OCI-LY7 (cell line): ENCODE measurements at regions of chr9 and their contacts with region 1.

Region 1: GRCh38 chr9:71897577-71897976 is 13.4 kb downstream of the ABHD17B start:
- DNase-seq: peak; percentile 81
- H3K4me3 ChIP-seq: peak overlapping the region; percentile 53
- H3K27ac ChIP-seq: peak overlapping the region; percentile 99
- H3K4me1 ChIP-seq: peaks cover 90% of the 10 kb centered on the region
- CTCF ChIP-seq: no peak

Region 2: DNA sequence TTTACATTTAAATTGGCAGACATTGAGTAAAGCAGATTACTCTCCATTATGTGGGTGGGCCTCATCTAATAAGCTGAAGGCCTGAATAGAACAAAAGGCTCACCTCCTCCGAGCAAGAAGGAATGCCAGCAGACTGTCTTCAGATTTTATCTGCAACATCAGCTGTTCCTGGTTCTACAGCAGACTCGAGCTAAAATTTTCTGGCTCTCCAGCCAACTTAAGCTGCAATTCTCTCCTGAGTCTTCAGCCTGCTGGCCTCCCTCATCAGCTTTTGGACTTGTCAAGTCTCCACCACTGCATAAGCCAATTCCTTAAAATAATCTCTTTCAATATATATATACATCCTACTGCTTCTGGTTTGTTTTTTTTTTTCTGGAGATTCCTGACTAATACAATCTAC is 788.6 kb before region 1 on chr9:
- CTCF ChIA-PET with region 1: no interaction called
- POLR2A ChIA-PET with region 1: no interaction called
- intact Hi-C with region 1: no loop called
- DNase-seq: no peak
- H3K4me3 ChIP-seq: no peak overlapping the region
- H3K27ac ChIP-seq: no peak overlapping the region
- H3K4me1 ChIP-seq: no peaks in the 10 kb centered on the region
- CTCF ChIP-seq: no peak

Region 3: GRCh38 chr9:71878327-71879274 is 19.0 kb before region 1 on chr9:
- CTCF ChIA-PET with region 1: no interaction called
- POLR2A ChIA-PET with region 1: interaction called, 11 read pairs
- intact Hi-C with region 1: no loop called
- DNase-seq: no peak
- H3K4me3 ChIP-seq: no peak overlapping the region
- H3K27ac ChIP-seq: no peak overlapping the region
- H3K4me1 ChIP-seq: no peaks in the 10 kb centered on the region
- CTCF ChIP-seq: no peak

Region 4: GRCh38 chr9:71885467-71885866 is 12.1 kb before region 1 on chr9:
- CTCF ChIA-PET with region 1: interaction called, 4 read pairs
- POLR2A ChIA-PET with region 1: interaction called, 99 read pairs
- intact Hi-C with region 1: loop called (anchors 1 kb)
- DNase-seq: peak; percentile 48
- H3K4me3 ChIP-seq: peak overlapping the region; percentile 40
- H3K27ac ChIP-seq: peak overlapping the region; percentile 94
- H3K4me1 ChIP-seq: peaks cover 60% of the 10 kb centered on the region
- CTCF ChIP-seq: no peak

Region 5: DNA sequence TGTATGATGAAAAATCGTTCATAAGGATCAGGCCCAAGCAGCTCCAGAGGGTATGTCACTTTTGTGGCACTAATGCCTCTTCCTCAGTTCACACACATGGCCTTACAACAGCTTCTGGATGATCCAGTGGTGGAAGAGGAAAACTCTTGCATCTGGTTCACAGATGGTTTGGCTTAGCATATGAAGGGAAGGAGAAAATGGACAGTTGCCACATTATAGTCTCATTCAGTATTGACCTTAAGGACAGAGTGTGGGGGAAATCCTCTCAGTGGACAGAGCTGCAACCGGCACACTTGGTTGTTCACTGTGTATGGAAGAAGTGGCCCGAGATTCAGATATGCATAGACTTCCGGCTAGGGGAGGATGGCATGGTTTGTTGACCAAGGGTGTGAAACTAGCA is 140.0 kb after region 1 on chr9:
- CTCF ChIA-PET with region 1: no interaction called
- POLR2A ChIA-PET with region 1: no interaction called
- intact Hi-C with region 1: no loop called
- DNase-seq: no peak
- H3K4me3 ChIP-seq: no peak overlapping the region
- H3K27ac ChIP-seq: no peak overlapping the region
- H3K4me1 ChIP-seq: no peaks in the 10 kb centered on the region
- CTCF ChIP-seq: no peak